Heart right ventricle (tissue), 16 donors: ENCODE measurements at regions of chr16 and their contacts with region 1.

Region 1: GRCh38 chr16:69396187-69397061 is 10.6 kb upstream of the TERF2 start:
- DNase-seq: peak in 1 of 2 donors; percentile 84
- ATAC-seq: peak in 7 of 8 donors; percentile 40 to 66 (median 45)
- H3K4me3 ChIP-seq: no peak overlapping the region
- H3K27ac ChIP-seq: peak overlapping the region in 9 of 10 donors; percentile 57 to 82 (median 77)
- H3K4me1 ChIP-seq: peaks cover 7 to 46% (median 26%) of the 10 kb centered on the region in 9 donors
- H3K27me3 ChIP-seq: no peaks in the 10 kb centered on the region
- CTCF ChIP-seq: peak in 7 of 9 donors; percentile 65 to 82 (median 74)

Region 2: GRCh38 chr16:69465083-69465721 is 68.8 kb after region 1 on chr16:
- intact Hi-C with region 1: loop called in 1 of 10 experiments (anchors 10 kb)
- DNase-seq: no peak
- ATAC-seq: no peak
- H3K4me3 ChIP-seq: no peak overlapping the region
- H3K27ac ChIP-seq: peak overlapping the region in 1 of 10 donors; percentile 19
- H3K4me1 ChIP-seq: peaks cover 0 to 32% (median 8%) of the 10 kb centered on the region in 9 donors
- H3K27me3 ChIP-seq: peaks cover 0 to 43% (median 0%) of the 10 kb centered on the region in 7 donors
- CTCF ChIP-seq: no peak

Region 3: GRCh38 chr16:69565671-69566239 is 169.3 kb after region 1 on chr16 and contains the start of gene NFAT5:
- intact Hi-C with region 1: loop called in 8 of 10 experiments (anchors 2 to 5 kb)
- DNase-seq: peak; percentile 86 to 88
- ATAC-seq: peak; percentile 87 to 95 (median 91)
- H3K4me3 ChIP-seq: peak within 1 kb of the TSS; percentile 75 to 97 (median 90)
- H3K27ac ChIP-seq: peak within 1 kb of the TSS; percentile 96 to 100 (median 98)
- H3K4me1 ChIP-seq: peaks cover 2 to 51% (median 44%) of the 10 kb centered on the region in 9 donors
- H3K27me3 ChIP-seq: no peaks in the 10 kb centered on the region
- CTCF ChIP-seq: peak in 2 of 9 donors; percentile 33 to 37
- total RNA-seq, gene NFAT5: 14.6 to 23.7 (median 21.5) TPM

Region 4: GRCh38 chr16:69644790-69645189 is 248.4 kb after region 1 on chr16:
- intact Hi-C with region 1: loop called in 1 of 10 experiments (anchors 10 kb)
- DNase-seq: no peak
- ATAC-seq: no peak
- H3K4me3 ChIP-seq: no peak overlapping the region
- H3K27ac ChIP-seq: no peak overlapping the region
- H3K4me1 ChIP-seq: peaks cover 0 to 6% (median 0%) of the 10 kb centered on the region in 9 donors
- H3K27me3 ChIP-seq: no peaks in the 10 kb centered on the region
- CTCF ChIP-seq: no peak

Region 5: DNA sequence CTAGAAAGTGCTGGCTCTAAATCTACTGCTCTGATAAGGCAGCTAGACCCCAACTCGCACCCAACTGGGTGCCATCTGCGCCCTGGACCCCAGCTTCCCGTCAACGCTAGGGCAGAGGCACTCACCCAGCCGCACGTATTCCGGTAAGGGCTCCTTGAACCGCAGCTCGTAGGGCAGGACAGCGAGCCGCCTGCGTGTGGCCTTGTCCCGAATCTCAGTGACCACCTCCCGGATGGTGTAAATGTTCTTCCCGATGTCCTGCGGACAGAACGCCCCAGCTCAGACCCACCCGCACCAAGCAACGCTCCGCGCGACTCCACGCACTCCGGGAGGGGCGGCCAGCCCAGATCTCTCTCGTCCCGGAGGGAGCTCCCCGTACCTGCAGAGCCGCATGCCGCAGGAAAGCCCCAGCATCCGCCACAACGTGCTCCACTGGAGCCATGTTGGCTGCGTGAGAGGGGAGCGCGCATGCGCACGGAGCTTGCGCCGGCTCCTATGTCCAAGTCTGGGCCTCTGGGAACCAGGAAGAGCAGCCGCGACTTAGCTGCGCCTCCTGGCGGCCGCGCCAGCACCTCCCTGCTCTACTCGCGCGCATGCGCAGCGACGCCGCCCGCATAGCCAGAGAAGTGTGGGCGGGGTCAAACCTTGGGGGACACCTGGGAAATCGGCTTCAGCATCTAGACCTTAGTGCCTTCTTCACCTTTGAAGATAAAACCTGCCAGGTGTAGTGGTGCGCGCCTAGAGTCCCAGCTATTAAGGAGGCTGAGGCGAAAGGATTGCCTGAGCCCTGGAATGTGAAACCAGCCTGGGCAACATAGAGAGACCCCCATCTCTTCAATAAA is 358.3 kb after region 1 on chr16 and contains the start of gene NOB1:
- intact Hi-C with region 1: loop called in 8 of 10 experiments (anchors 2 to 10 kb)
- DNase-seq: peak; percentile 93 to 98
- ATAC-seq: peak; percentile 98 to 99 (median 99)
- H3K4me3 ChIP-seq: peak within 1 kb of the TSS; percentile 63 to 93 (median 82)
- H3K27ac ChIP-seq: peak within 1 kb of the TSS in 9 of 10 donors; percentile 49 to 86 (median 75)
- H3K4me1 ChIP-seq: peaks cover 0 to 26% (median 18%) of the 10 kb centered on the region in 9 donors
- H3K27me3 ChIP-seq: no peaks in the 10 kb centered on the region
- CTCF ChIP-seq: peak; percentile 97 to 100 (median 98)
- total RNA-seq, gene NOB1: 11.2 to 23.4 (median 15.6) TPM